Activated B cell treated with CpG ODN at 0.5 μM for 24 hours (primary cell): ENCODE measurements at regions of chr15 and their contacts with region 1.

Region 1: DNA sequence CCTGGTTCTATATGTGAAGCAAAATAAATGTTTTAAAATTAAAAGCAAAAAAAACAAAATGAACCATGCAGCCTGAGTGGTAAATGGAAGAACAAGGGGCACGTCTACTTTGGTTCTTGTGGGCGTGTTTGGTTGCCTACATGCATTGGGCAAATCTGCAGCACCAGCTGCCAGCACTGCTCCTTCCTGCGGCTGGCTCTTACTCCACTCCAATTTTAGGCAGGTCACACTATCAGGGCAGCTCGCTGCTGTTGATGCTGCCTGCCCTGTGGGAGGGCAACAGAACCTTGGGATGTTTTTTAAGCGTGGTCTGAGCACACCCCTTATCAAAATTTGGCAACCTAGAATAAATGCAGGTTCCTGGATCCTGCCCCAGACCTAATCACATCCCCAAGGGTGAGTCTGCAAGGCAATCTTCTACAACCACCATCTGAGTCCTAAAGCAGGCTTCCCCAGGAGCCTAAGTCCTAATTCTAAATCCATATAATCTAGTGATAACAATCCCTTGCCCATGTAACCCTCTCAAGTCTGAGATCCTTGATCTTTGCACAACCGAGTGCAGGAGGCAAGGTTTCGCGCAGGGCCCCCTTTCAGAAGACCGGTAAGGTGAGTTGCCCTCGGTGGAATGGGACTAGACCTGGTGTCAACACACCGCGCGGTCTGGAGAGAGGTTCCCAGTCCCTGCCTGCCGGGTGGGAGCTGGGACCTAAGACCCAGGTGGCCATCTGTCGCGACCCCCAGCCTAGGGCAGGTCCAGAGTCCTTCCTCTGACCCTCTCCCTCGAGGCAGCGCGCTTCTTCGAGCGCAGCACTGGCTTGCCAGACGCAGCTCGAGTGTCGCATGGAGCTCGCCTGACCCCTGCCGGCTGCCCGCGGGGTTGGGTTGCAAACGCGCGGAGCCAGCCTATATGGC is 15.9 kb downstream of the IVD start:
- DNase-seq: peak; percentile 77
- ATAC-seq: peak; percentile 97
- H3K4me3 Mint-ChIP-seq: no peak overlapping the region
- H3K27ac Mint-ChIP-seq: no peak overlapping the region
- H3K4me1 Mint-ChIP-seq: peaks cover 2% of the 10 kb centered on the region
- H3K27me3 Mint-ChIP-seq: no peaks in the 10 kb centered on the region
- CTCF ChIP-seq: peak; percentile 86

Region 2: GRCh38 chr15:40217159-40217824 is 204.2 kb before region 1 on chr15:
- CTCF ChIA-PET with region 1: no interaction called
- POLR2A ChIA-PET with region 1: no interaction called
- intact Hi-C with region 1: loop called (anchors 5 kb)
- DNase-seq: no peak
- ATAC-seq: peak; percentile 100
- H3K4me3 Mint-ChIP-seq: no peak overlapping the region
- H3K27ac Mint-ChIP-seq: no peak overlapping the region
- H3K4me1 Mint-ChIP-seq: no peaks in the 10 kb centered on the region
- H3K27me3 Mint-ChIP-seq: no peaks in the 10 kb centered on the region
- CTCF ChIP-seq: peak; percentile 41

Region 3: GRCh38 chr15:40338041-40338657 is 83.4 kb before region 1 on chr15:
- CTCF ChIA-PET with region 1: interaction called, 113 read pairs
- POLR2A ChIA-PET with region 1: interaction called, 7 read pairs
- intact Hi-C with region 1: no loop called
- DNase-seq: peak; percentile 67
- ATAC-seq: peak; percentile 96
- H3K4me3 Mint-ChIP-seq: no peak overlapping the region
- H3K27ac Mint-ChIP-seq: no peak overlapping the region
- H3K4me1 Mint-ChIP-seq: peaks cover 24% of the 10 kb centered on the region
- H3K27me3 Mint-ChIP-seq: no peaks in the 10 kb centered on the region
- CTCF ChIP-seq: peak; percentile 17

Region 4: GRCh38 chr15:40367686-40368611 is 53.6 kb before region 1 on chr15:
- CTCF ChIA-PET with region 1: interaction called, 21 read pairs
- POLR2A ChIA-PET with region 1: interaction called, 4 read pairs
- intact Hi-C with region 1: loop called (anchors 1 kb)
- DNase-seq: peak; percentile 78
- ATAC-seq: peak; percentile 93
- H3K4me3 Mint-ChIP-seq: peak overlapping the region; percentile 83
- H3K27ac Mint-ChIP-seq: peak overlapping the region; percentile 82
- H3K4me1 Mint-ChIP-seq: peaks cover 13% of the 10 kb centered on the region
- H3K27me3 Mint-ChIP-seq: no peaks in the 10 kb centered on the region
- CTCF ChIP-seq: no peak

Region 5: GRCh38 chr15:40398413-40398873 is 23.1 kb before region 1 on chr15:
- CTCF ChIA-PET with region 1: interaction called, 14 read pairs
- POLR2A ChIA-PET with region 1: no interaction called
- intact Hi-C with region 1: no loop called
- DNase-seq: no peak
- ATAC-seq: peak; percentile 86
- H3K4me3 Mint-ChIP-seq: peak overlapping the region; percentile 42
- H3K27ac Mint-ChIP-seq: peak overlapping the region; percentile 38
- H3K4me1 Mint-ChIP-seq: peaks cover 18% of the 10 kb centered on the region
- H3K27me3 Mint-ChIP-seq: no peaks in the 10 kb centered on the region
- CTCF ChIP-seq: no peak

Region 6: DNA sequence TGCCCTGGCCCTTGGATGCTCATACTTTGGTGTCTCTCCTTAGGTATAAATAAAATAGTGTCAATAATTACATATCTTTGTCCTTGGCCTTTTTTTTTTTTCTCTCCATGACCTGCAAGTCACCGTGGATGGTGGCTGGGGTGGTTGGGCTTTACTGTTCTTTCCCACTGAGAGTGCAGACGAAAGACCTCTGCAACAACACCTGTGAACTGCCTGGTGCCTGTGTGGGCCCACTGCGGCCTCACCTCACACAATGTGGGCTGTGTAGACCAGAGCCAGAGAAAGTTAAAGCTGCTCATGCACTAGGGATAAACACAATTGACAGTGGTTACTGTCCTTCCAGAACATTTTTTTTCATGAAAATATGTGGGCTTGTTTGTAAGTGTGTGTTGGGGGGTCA is 104.4 kb after region 1 on chr15:
- CTCF ChIA-PET with region 1: no interaction called
- POLR2A ChIA-PET with region 1: no interaction called
- intact Hi-C with region 1: no loop called
- DNase-seq: no peak
- ATAC-seq: no peak
- H3K4me3 Mint-ChIP-seq: no peak overlapping the region
- H3K27ac Mint-ChIP-seq: no peak overlapping the region
- H3K4me1 Mint-ChIP-seq: no peaks in the 10 kb centered on the region
- H3K27me3 Mint-ChIP-seq: no peaks in the 10 kb centered on the region
- CTCF ChIP-seq: no peak

Region 7: DNA sequence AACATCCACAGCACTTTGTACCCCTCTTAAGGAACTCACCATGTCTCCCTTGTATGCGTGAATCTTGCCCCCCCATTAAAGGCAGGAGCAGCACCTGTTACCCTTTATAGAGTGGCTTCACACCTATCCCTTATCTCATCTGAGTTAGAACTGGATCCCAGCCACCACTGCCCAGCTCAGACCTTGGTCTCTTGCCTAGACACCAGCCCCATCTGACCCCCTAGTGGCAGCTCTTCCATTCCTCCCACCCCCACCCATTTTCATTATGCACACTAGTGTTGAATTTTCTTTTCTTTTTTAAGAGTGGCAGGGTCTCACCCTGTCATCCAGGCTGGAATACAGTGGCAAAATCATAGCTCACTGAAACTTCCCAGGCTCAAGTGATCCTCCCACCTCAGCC is 382.2 kb after region 1 on chr15:
- CTCF ChIA-PET with region 1: no interaction called
- POLR2A ChIA-PET with region 1: no interaction called
- intact Hi-C with region 1: no loop called
- DNase-seq: no peak
- ATAC-seq: no peak
- H3K4me3 Mint-ChIP-seq: no peak overlapping the region
- H3K27ac Mint-ChIP-seq: no peak overlapping the region
- H3K4me1 Mint-ChIP-seq: peaks cover 31% of the 10 kb centered on the region
- H3K27me3 Mint-ChIP-seq: no peaks in the 10 kb centered on the region
- CTCF ChIP-seq: no peak